ENCODE measurements at regions of chr11 and their contacts with region 1.

Region 1: DNA sequence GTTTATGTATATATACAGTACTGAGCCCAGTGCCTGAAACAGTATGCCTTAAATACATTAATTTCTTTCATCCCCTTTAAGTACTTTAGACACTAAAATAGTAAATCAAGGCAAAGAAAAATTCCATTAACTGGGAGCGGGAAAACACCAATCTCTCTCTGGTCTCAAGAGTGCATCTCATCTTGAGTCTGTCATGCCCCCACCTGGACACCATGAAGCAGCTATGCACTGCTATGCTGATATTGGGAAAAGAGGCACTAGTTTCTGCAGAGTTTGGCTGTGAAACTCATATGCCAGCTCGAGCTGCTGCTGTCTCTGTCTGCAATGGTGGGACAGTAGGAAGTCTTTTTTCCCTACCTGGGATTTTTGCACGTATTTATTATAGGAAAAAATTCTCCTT is 754.4 kb upstream of the RAG2 start:
- DNase-seq: no peak
- H3K4me3 ChIP-seq: no peak overlapping the region
- H3K27ac ChIP-seq: no peak overlapping the region
- H3K4me1 ChIP-seq: no peaks in the 10 kb centered on the region
- H3K27me3 ChIP-seq: no peaks in the 10 kb centered on the region
- CTCF ChIP-seq: no peak
- POLR2A ChIP-seq: no peak

Region 2: DNA sequence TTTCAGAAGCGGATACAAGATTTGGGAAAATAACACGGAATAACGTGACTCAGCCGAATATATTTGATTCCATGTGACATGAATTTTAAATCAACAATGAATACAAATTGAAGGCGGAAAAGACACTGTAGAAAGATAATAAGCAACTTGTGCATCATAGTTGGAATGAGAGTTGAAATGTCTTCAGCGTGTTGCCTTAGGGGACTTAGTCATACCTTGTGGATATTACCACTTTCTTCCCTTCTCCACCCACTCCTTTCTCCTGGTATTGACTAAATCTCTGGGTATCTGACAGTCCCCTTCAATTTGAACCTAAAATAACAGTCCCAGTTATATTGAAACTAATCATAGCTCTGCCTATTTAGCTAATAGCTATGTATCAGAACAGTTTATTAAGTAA is 1618.7 kb after region 1 on chr11:
- intact Hi-C with region 1: loop called (anchors 5 kb)
- DNase-seq: no peak
- H3K4me3 ChIP-seq: no peak overlapping the region
- H3K27ac ChIP-seq: no peak overlapping the region
- H3K4me1 ChIP-seq: no peaks in the 10 kb centered on the region
- H3K27me3 ChIP-seq: no peaks in the 10 kb centered on the region
- CTCF ChIP-seq: no peak
- POLR2A ChIP-seq: no peak

Measured in vagina (tissue), 2 donors.